ENCODE measurements at regions of chr2 and their contacts with region 1.

Region 1: GRCh38 chr2:160590664-160591063 is 97.1 kb upstream of the RBMS1 start:
- DNase-seq: peak; percentile 10
- H3K4me3 ChIP-seq: no peak overlapping the region
- H3K27ac ChIP-seq: no peak overlapping the region
- H3K4me1 ChIP-seq: no peaks in the 10 kb centered on the region
- H3K27me3 ChIP-seq: no peaks in the 10 kb centered on the region
- CTCF ChIP-seq: no peak
- POLR2A ChIP-seq: no peak

Region 2: DNA sequence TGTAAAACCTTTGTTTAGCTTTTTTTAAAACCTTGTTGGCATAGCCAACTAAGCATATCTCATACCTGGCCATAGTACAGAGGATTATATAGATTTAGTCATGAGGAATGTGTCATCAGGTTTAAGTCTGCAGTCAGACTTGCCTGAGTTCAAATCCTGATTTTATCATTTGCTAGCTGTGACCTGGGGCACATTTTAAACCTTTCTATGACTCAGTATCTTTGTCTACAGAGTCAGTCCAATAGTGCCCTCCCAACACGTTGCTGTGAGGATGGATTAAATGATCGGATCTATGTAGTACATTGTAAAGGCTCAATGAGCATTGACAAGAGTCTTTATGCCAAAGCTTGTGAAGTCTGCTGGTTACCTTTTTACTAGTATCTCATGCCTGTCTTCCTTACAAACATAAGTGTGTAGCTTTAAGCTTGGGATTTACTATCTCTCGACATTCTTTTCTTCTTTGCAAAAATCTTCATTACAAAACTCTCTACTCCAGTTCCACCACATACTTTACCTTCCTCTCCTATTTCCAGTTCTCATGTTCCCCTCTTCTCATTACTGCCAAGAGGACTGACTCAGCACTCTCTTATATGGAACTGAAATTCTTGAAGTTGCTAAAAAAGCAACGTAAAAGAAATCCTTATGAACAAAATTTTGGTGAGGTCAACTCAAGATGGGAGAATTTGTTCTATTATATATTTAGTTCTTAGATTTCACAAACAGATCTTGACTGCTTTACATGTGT is 28.9 kb before region 1 on chr2:
- CTCF ChIA-PET with region 1: interaction called, 3 read pairs
- POLR2A ChIA-PET with region 1: no interaction called
- dilution Hi-C with region 1: no loop called
- intact Hi-C with region 1: loop called (anchors 1 kb)
- DNase-seq: no peak
- H3K4me3 ChIP-seq: no peak overlapping the region
- H3K27ac ChIP-seq: no peak overlapping the region
- H3K4me1 ChIP-seq: no peaks in the 10 kb centered on the region
- H3K27me3 ChIP-seq: no peaks in the 10 kb centered on the region
- CTCF ChIP-seq: no peak
- POLR2A ChIP-seq: no peak

Region 3: DNA sequence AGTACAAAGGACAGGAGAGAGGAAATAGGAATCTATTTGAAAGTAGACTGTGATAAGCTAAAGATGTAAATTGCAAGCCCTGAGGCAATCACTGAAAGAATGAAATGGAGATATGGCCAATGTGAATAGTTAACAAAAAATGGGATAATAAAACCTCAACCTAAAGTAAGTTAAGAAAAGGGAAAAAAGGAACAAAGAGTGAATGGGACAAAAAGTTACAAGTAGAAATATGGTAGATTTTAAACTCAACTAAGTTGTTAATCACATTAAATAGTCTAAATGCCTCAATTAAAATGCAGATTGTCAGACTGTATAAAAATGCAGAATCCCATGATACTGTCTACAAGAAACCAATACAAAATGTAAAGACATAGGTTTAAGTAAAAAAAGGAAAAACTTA is 68.2 kb after region 1 on chr2:
- CTCF ChIA-PET with region 1: no interaction called
- POLR2A ChIA-PET with region 1: no interaction called
- dilution Hi-C with region 1: no loop called
- intact Hi-C with region 1: no loop called
- DNase-seq: no peak
- H3K4me3 ChIP-seq: no peak overlapping the region
- H3K27ac ChIP-seq: no peak overlapping the region
- H3K4me1 ChIP-seq: no peaks in the 10 kb centered on the region
- H3K27me3 ChIP-seq: no peaks in the 10 kb centered on the region
- CTCF ChIP-seq: no peak
- POLR2A ChIP-seq: no peak

Measured in endothelial cell of umbilical vein (primary cell).